ENCODE measurements at regions of chr9 and their contacts with region 1.

Region 1: GRCh38 chr9:19493174-19493811 is 84.5 kb downstream of the ACER2 start:
- DNase-seq: peak; percentile 56 to 90 (median 86)
- ATAC-seq: peak; percentile 75 to 91 (median 90)
- H3K4me3 ChIP-seq: peak overlapping the region in 9 of 12 donors; percentile 19 to 50 (median 39)
- H3K27ac ChIP-seq: peak overlapping the region; percentile 3 to 79 (median 40)
- H3K4me1 ChIP-seq: peaks cover 0 to 16% (median 4%) of the 10 kb centered on the region in 12 donors
- H3K27me3 ChIP-seq: no peaks in the 10 kb centered on the region
- CTCF ChIP-seq: peak; percentile 57 to 85 (median 72)
- POLR2A ChIP-seq: no peak

Region 2: GRCh38 chr9:19471737-19472648 is 21.3 kb before region 1 on chr9:
- intact Hi-C with region 1: loop called in 1 of 10 experiments (anchors 1 kb)
- DNase-seq: peak; percentile 43 to 75 (median 61)
- ATAC-seq: peak; percentile 32 to 88 (median 78)
- H3K4me3 ChIP-seq: peak overlapping the region in 7 of 12 donors; percentile 10 to 34 (median 17)
- H3K27ac ChIP-seq: peak overlapping the region in 1 of 12 donors; percentile 42
- H3K4me1 ChIP-seq: peaks cover 0 to 15% (median 10%) of the 10 kb centered on the region in 12 donors
- H3K27me3 ChIP-seq: no peaks in the 10 kb centered on the region
- CTCF ChIP-seq: peak; percentile 65 to 85 (median 74)
- POLR2A ChIP-seq: no peak

Region 3: GRCh38 chr9:19533373-19533772 is 40.1 kb after region 1 on chr9:
- intact Hi-C with region 1: no loop called
- DNase-seq: no peak
- ATAC-seq: peak in 3 of 4 donors; percentile 28 to 81 (median 55)
- H3K4me3 ChIP-seq: no peak overlapping the region
- H3K27ac ChIP-seq: no peak overlapping the region
- H3K4me1 ChIP-seq: no peaks in the 10 kb centered on the region
- H3K27me3 ChIP-seq: peaks cover 0 to 2% (median 0%) of the 10 kb centered on the region in 9 donors
- CTCF ChIP-seq: no peak
- POLR2A ChIP-seq: no peak

Region 4: DNA sequence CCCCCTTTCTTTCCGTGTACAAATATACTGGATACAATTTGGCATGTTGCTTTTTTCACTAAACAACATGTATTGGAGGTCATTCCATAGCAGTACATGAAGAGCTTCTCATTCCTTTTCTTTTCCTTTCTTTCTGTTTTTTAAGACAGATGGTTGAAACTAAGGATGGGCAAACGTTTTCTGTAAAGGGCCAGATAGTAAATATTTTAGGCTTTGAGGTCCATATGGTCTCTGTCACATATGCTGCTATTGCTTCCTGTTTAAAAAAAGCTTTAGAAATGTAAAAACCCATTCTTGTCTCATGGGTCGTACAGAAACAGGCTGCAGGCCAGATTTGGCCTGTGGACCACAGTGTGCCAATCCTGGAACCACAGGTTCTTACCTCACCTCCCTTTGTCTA is 75.7 kb after region 1 on chr9:
- intact Hi-C with region 1: no loop called
- DNase-seq: no peak
- ATAC-seq: no peak
- H3K4me3 ChIP-seq: no peak overlapping the region
- H3K27ac ChIP-seq: no peak overlapping the region
- H3K4me1 ChIP-seq: no peaks in the 10 kb centered on the region
- H3K27me3 ChIP-seq: peaks cover 0 to under 1% (median 0%) of the 10 kb centered on the region in 9 donors
- CTCF ChIP-seq: no peak
- POLR2A ChIP-seq: no peak

Region 5: DNA sequence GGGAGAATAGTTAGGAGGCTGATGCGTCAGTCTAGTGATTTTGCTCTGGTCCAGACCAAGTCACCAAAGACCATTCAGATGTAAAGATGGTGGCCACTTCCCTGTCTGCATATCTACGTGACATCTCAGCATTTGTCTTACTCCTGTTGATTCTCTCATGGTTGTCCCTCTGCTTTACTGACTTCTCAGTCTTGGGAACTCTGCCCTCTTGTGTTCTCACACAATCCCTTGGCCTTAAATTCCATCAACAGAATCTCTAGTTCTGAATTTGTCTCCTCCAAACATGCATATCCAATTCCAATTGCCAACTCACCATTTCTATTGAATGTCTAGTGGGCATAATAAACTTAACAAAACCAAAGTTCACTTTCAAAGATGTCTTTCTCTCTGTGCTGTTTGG is 147.8 kb after region 1 on chr9:
- intact Hi-C with region 1: loop called in 2 of 10 experiments (anchors 10 kb)
- DNase-seq: no peak
- ATAC-seq: no peak
- H3K4me3 ChIP-seq: no peak overlapping the region
- H3K27ac ChIP-seq: no peak overlapping the region
- H3K4me1 ChIP-seq: no peaks in the 10 kb centered on the region
- H3K27me3 ChIP-seq: no peaks in the 10 kb centered on the region
- CTCF ChIP-seq: no peak
- POLR2A ChIP-seq: no peak

Region 6: GRCh38 chr9:19699756-19700155 is 206.5 kb after region 1 on chr9:
- intact Hi-C with region 1: no loop called
- DNase-seq: no peak
- ATAC-seq: no peak
- H3K4me3 ChIP-seq: no peak overlapping the region
- H3K27ac ChIP-seq: no peak overlapping the region
- H3K4me1 ChIP-seq: no peaks in the 10 kb centered on the region
- H3K27me3 ChIP-seq: no peaks in the 10 kb centered on the region
- CTCF ChIP-seq: no peak
- POLR2A ChIP-seq: no peak

Region 7: DNA sequence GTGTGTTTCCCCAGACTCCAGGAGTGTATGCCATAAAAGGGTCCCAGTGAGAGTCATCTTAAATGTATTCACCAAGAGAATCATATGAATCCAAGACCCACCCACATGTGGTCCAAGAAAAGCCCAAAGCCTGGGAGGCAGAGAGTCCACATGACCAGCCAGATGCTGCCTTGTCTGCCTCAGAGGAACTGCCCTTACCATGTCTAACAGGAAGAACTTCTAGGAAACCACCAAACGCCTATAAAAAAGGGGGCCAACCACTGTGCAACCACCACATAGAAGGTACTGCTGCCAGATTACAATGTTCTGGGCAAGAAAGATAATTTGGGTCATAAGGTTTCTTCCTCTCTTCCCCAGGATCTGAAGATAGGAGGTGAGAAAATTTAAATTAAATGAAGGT is 425.3 kb after region 1 on chr9:
- intact Hi-C with region 1: loop called in 5 of 10 experiments (anchors 2 to 10 kb)
- DNase-seq: no peak
- ATAC-seq: no peak
- H3K4me3 ChIP-seq: no peak overlapping the region
- H3K27ac ChIP-seq: no peak overlapping the region
- H3K4me1 ChIP-seq: no peaks in the 10 kb centered on the region
- H3K27me3 ChIP-seq: peaks cover 0 to 6% (median 0%) of the 10 kb centered on the region in 9 donors
- CTCF ChIP-seq: no peak
- POLR2A ChIP-seq: no peak